Panc1 (cell line): ENCODE measurements at regions of chr11 and their contacts with region 1.

Region 1: GRCh38 chr11:90803378-90803777 is 580.5 kb upstream of the CHORDC1 start:
- DNase-seq: no peak
- ATAC-seq: no peak
- H3K4me3 ChIP-seq: no peak overlapping the region
- H3K27ac ChIP-seq: no peak overlapping the region
- H3K4me1 ChIP-seq: no peaks in the 10 kb centered on the region
- H3K27me3 ChIP-seq: no peaks in the 10 kb centered on the region
- CTCF ChIP-seq: no peak

Region 2: DNA sequence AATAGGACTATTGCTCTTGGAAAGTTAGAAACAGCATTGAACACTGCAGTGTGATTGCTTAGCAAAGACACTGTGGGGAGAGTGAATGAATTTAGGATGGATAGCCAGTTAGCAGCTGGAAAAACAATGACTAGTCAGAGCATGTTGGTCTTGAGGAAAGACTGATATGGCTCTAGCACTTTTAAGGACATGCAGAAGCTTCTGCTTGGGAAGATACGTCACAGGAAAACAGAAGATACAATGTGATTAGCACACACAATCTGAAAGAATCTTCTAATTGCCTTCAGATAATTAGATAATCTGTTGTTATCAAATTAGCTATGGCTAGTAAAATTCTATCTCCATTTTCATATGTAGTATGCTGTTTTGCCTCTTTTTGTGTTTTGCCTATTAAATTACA is 49.8 kb before region 1 on chr11:
- CTCF ChIA-PET with region 1: no interaction called
- POLR2A ChIA-PET with region 1: no interaction called
- in situ Hi-C with region 1: no loop called
- intact Hi-C with region 1: loop called (anchors 5 kb)
- DNase-seq: no peak
- ATAC-seq: no peak
- H3K4me3 ChIP-seq: no peak overlapping the region
- H3K27ac ChIP-seq: no peak overlapping the region
- H3K4me1 ChIP-seq: no peaks in the 10 kb centered on the region
- H3K27me3 ChIP-seq: no peaks in the 10 kb centered on the region
- CTCF ChIP-seq: no peak